Naive thymus-derived CD4-positive, alpha-beta T cell (primary cell): ENCODE measurements at regions of chr12 and their contacts with region 1.

Region 1: GRCh38 chr12:48197971-48198671 is 5.0 kb downstream of the OR10AD1 start:
- DNase-seq: peak; percentile 75 to 88 (median 86)
- ATAC-seq: peak; percentile 97
- H3K4me3 ChIP-seq: peak overlapping the region; percentile 89
- H3K4me3 Mint-ChIP-seq: peak overlapping the region; percentile 83 to 96 (median 92)
- H3K27ac ChIP-seq: peak overlapping the region; percentile 98
- H3K27ac Mint-ChIP-seq: peak overlapping the region; percentile 94 to 99 (median 96)
- H3K4me1 ChIP-seq: peaks cover 28% of the 10 kb centered on the region in 2 donors
- H3K4me1 Mint-ChIP-seq: peaks cover 31 to 53% (median 48%) of the 10 kb centered on the region in 7 donors
- H3K27me3 ChIP-seq: no peaks in the 10 kb centered on the region
- H3K27me3 Mint-ChIP-seq: peaks cover 0 to 28% (median 0%) of the 10 kb centered on the region in 5 donors

Region 2: DNA sequence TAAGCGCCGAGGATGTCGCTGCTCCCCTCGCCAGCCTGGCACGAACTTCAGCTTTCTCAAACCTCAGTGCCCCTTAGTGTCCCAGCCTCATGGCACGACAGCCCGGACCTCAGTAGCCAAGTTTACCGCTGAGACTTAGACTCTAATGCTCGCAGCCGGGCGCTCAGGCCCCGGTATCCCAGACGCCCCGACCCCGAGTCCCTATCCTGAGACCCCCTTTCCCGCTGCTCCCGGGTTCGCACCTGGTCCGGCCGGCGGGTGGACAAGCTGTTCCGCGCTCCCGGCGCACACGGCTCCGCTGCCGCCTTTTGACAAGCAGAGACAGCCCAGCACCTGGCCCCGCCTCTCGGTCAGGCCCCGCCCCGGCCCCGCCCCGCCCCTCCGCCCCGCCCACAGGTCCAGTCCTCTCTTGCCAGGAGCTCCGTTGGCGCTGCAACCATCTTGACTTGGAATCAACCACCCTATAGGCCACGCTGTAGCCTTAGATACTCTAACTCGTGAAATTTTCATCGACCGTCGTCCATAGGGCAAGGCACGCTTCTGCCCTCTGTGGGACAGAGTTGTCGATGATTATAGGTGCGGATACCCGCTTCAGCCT is 293.3 kb before region 1 on chr12 and contains the start of gene VDR:
- CTCF ChIA-PET with region 1: no interaction called
- POLR2A ChIA-PET with region 1: no interaction called
- intact Hi-C with region 1: loop called in 1 of 2 experiments (anchors 1 kb)
- DNase-seq: peak; percentile 42 to 76 (median 64)
- ATAC-seq: peak; percentile 86
- H3K4me3 ChIP-seq: peak within 1 kb of the TSS; percentile 73
- H3K4me3 Mint-ChIP-seq: peak within 1 kb of the TSS; percentile 86 to 98 (median 94)
- H3K27ac ChIP-seq: peak within 1 kb of the TSS; percentile 44
- H3K27ac Mint-ChIP-seq: peak within 1 kb of the TSS; percentile 51 to 88 (median 74)
- H3K4me1 ChIP-seq: peaks cover 25 to 41% of the 10 kb centered on the region in 2 donors
- H3K4me1 Mint-ChIP-seq: peaks cover 35 to 57% (median 47%) of the 10 kb centered on the region in 7 donors
- H3K27me3 ChIP-seq: no peaks in the 10 kb centered on the region
- H3K27me3 Mint-ChIP-seq: peaks cover 0 to 34% (median 0%) of the 10 kb centered on the region in 5 donors
- total RNA-seq, gene VDR: 1.6 to 82.6 (median 2.9) TPM

Region 3: GRCh38 chr12:48183091-48183875 is 14.8 kb before region 1 on chr12 and contains the start of gene CCDC184:
- CTCF ChIA-PET with region 1: interaction called, 33 read pairs
- POLR2A ChIA-PET with region 1: interaction called, 52 read pairs
- intact Hi-C with region 1: loop called (anchors 1 kb)
- DNase-seq: peak; percentile 58 to 85 (median 83)
- ATAC-seq: peak; percentile 84
- H3K4me3 ChIP-seq: peak within 1 kb of the TSS; percentile 80
- H3K4me3 Mint-ChIP-seq: peak within 1 kb of the TSS; percentile 91 to 98 (median 96)
- H3K27ac ChIP-seq: peak within 1 kb of the TSS; percentile 59
- H3K27ac Mint-ChIP-seq: peak within 1 kb of the TSS; percentile 60 to 95 (median 86)
- H3K4me1 ChIP-seq: peaks cover 6 to 11% of the 10 kb centered on the region in 2 donors
- H3K4me1 Mint-ChIP-seq: peaks cover 5 to 28% (median 8%) of the 10 kb centered on the region in 7 donors
- H3K27me3 ChIP-seq: peaks cover 0 to 4% of the 10 kb centered on the region in 2 donors
- H3K27me3 Mint-ChIP-seq: peaks cover 21 to 81% (median 38%) of the 10 kb centered on the region in 5 donors
- total RNA-seq, gene CCDC184: 0.22 to 3.8 (median 1.8) TPM in 4 of 5 experiments, not detected in the other

Region 4: GRCh38 chr12:48296586-48297282 is 98.6 kb after region 1 on chr12:
- CTCF ChIA-PET with region 1: no interaction called
- POLR2A ChIA-PET with region 1: interaction called, 4 read pairs
- intact Hi-C with region 1: loop called in 1 of 2 experiments (anchors 1 kb)
- DNase-seq: peak in 8 of 9 donors; percentile 23 to 49 (median 33)
- ATAC-seq: peak; percentile 81
- H3K4me3 ChIP-seq: peak overlapping the region; percentile 45
- H3K4me3 Mint-ChIP-seq: peak overlapping the region; percentile 66 to 89 (median 84)
- H3K27ac ChIP-seq: peak overlapping the region; percentile 50
- H3K27ac Mint-ChIP-seq: peak overlapping the region in 8 of 9 donors; percentile 12 to 87 (median 40)
- H3K4me1 ChIP-seq: no peaks in the 10 kb centered on the region
- H3K4me1 Mint-ChIP-seq: peaks cover 9 to 16% (median 12%) of the 10 kb centered on the region in 7 donors
- H3K27me3 ChIP-seq: no peaks in the 10 kb centered on the region
- H3K27me3 Mint-ChIP-seq: peaks cover 6 to 18% (median 10%) of the 10 kb centered on the region in 5 donors

Region 5: GRCh38 chr12:48454667-48455066 is 256.5 kb after region 1 on chr12:
- CTCF ChIA-PET with region 1: no interaction called
- POLR2A ChIA-PET with region 1: interaction called, 4 read pairs
- intact Hi-C with region 1: loop called in 1 of 2 experiments (anchors 1 kb)
- DNase-seq: peak in 7 of 9 donors; percentile 13 to 57 (median 32)
- ATAC-seq: peak; percentile 73
- H3K4me3 ChIP-seq: no peak overlapping the region
- H3K4me3 Mint-ChIP-seq: no peak overlapping the region
- H3K27ac ChIP-seq: no peak overlapping the region
- H3K27ac Mint-ChIP-seq: no peak overlapping the region
- H3K4me1 ChIP-seq: no peaks in the 10 kb centered on the region
- H3K4me1 Mint-ChIP-seq: no peaks in the 10 kb centered on the region
- H3K27me3 ChIP-seq: no peaks in the 10 kb centered on the region
- H3K27me3 Mint-ChIP-seq: peaks cover 0 to 18% (median 8%) of the 10 kb centered on the region in 5 donors

Region 6: GRCh38 chr12:48592591-48593088 is 394.5 kb after region 1 on chr12:
- CTCF ChIA-PET with region 1: no interaction called
- POLR2A ChIA-PET with region 1: no interaction called
- intact Hi-C with region 1: no loop called
- DNase-seq: no peak
- ATAC-seq: no peak
- H3K4me3 ChIP-seq: no peak overlapping the region
- H3K4me3 Mint-ChIP-seq: no peak overlapping the region
- H3K27ac ChIP-seq: no peak overlapping the region
- H3K27ac Mint-ChIP-seq: no peak overlapping the region
- H3K4me1 ChIP-seq: no peaks in the 10 kb centered on the region
- H3K4me1 Mint-ChIP-seq: no peaks in the 10 kb centered on the region
- H3K27me3 ChIP-seq: peaks cover 0 to 3% of the 10 kb centered on the region in 2 donors
- H3K27me3 Mint-ChIP-seq: peaks cover 16 to 42% (median 27%) of the 10 kb centered on the region in 5 donors

Region 7: DNA sequence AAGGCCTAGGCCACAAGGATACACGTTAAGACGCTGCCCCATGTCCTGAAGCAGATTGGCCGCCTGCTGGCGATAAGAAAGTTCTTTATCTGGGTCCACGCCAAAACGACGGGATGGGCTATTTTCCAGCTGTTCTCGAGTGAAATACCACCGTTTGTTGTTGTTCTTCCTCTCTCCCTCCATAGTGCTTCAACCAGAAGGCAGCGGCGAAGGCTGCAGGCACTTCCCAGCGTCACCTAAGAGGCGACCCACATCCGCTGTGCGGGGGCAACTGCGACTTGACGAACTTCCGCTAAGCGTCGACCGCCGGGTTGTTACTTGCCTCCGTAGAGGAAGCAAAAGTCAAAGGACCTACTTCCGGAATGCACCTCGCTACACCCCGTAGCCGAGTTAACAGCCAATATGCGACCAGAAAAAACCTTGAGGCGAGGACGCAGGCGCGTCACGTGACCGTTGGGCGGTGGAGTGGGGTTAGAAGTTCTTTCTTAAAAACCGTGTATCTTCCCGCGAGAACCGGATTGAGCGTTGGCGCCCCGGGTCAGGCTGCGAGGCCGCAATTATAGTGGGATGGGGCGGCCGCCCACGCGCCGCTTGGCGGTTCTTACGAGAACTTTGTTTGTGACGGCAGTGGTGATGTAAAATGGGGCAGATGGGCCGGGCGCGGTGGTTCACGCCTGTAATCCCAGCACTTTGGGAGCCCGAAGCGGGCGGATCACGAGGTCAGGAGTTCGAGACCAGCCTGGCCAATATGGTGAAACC is 518.6 kb after region 1 on chr12 and contains the start of gene CCNT1:
- CTCF ChIA-PET with region 1: no interaction called
- POLR2A ChIA-PET with region 1: interaction called, 6 read pairs
- intact Hi-C with region 1: loop called (anchors 1 kb)
- DNase-seq: peak; percentile 90 to 100 (median 99)
- ATAC-seq: peak; percentile 93
- H3K4me3 ChIP-seq: peak within 1 kb of the TSS; percentile 88
- H3K4me3 Mint-ChIP-seq: peak within 1 kb of the TSS; percentile 89 to 98 (median 94)
- H3K27ac ChIP-seq: peak within 1 kb of the TSS; percentile 95
- H3K27ac Mint-ChIP-seq: peak within 1 kb of the TSS; percentile 95 to 99 (median 98)
- H3K4me1 ChIP-seq: peaks cover 14 to 24% of the 10 kb centered on the region in 2 donors
- H3K4me1 Mint-ChIP-seq: peaks cover 21 to 50% (median 37%) of the 10 kb centered on the region in 7 donors
- H3K27me3 ChIP-seq: no peaks in the 10 kb centered on the region
- H3K27me3 Mint-ChIP-seq: peaks cover 0 to 4% (median 0%) of the 10 kb centered on the region in 5 donors
- total RNA-seq, gene CCNT1: 62.5 to 127 (median 76.6) TPM